ENCODE measurements at regions of chr2 and their contacts with region 1.

Region 1: DNA sequence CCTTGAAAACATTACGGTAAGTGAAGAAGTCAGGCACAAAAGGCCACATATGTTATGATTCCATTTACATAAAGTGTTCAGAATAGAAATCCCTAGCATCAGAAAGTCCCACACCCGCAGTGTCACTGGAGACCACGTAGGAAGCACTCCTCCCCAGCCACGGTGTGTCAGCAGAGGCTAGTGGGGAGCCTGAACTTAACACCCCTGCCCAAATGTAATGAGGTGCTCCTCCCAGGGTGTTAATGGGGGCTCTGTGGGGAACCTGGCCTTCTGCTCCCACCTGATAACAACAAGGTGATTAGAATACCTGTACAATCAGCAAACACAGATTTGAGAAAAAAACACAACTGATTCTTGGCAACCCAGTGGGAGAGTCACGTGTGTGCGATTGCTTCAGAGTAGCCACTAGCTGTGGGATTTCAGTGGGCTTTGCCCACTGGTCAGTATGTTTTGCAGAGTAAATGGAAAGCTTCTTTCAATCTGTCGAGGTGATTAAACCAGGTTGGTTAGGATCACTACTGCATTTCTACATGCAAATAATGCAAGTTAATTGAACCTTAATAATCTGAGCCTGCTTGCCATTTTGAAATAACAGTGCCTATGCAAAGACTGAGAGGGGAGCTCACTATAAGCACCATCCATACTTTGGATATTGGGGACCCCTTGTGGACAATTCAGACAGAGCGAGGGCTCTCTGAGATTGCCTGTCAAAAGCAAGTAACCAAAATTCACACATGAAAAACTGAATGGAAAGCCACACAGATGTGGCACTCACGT is 20.6 kb upstream of the ATRAID start:
- DNase-seq: peak; percentile 73
- H3K4me3 ChIP-seq: no peak overlapping the region
- H3K27ac ChIP-seq: no peak overlapping the region
- H3K4me1 ChIP-seq: no peaks in the 10 kb centered on the region
- H3K27me3 ChIP-seq: peaks cover 2 to 3% of the 10 kb centered on the region in 2 experiments
- CTCF ChIP-seq: peak; percentile 48 to 65
- POLR2A ChIP-seq: no peak

Region 2: DNA sequence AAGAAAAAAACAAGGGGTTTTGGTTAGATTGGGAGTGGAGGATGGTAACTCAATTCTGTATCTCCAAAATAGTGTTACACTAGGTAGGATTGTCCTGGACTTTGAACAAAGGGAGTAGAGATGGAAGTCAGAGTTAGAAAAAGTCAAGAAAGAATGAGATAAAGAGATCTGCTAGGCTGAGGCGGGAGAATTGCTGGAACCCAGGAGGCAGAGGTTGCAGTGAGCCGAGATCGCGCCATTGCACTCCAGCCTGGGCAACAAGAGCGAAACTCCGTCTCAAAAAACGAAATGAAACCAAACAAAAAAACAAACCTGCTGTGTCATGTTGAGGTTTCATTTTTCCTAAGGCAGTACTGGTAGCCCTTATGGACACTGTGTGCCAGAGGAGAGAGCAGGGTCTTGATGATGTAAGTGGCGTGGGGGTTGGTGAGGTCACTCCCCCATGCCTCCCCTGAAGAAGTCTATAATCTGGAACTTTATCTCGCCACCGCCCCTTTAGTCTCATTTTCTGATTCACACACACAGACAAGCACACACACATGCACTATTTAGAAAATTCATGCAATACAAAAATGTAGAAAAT is 779.1 kb before region 1 on chr2:
- CTCF ChIA-PET with region 1: no interaction called
- POLR2A ChIA-PET with region 1: no interaction called
- dilution Hi-C with region 1: no loop called
- intact Hi-C with region 1: no loop called
- DNase-seq: no peak
- H3K4me3 ChIP-seq: no peak overlapping the region
- H3K27ac ChIP-seq: no peak overlapping the region
- H3K4me1 ChIP-seq: no peaks in the 10 kb centered on the region
- H3K27me3 ChIP-seq: peaks cover 1 to 7% of the 10 kb centered on the region in 2 experiments
- CTCF ChIP-seq: no peak
- POLR2A ChIP-seq: no peak

Region 3: GRCh38 chr2:27145685-27146084 is 45.6 kb before region 1 on chr2:
- CTCF ChIA-PET with region 1: interaction called, 10 read pairs
- POLR2A ChIA-PET with region 1: no interaction called
- dilution Hi-C with region 1: no loop called
- intact Hi-C with region 1: no loop called
- DNase-seq: no peak
- H3K4me3 ChIP-seq: no peak overlapping the region
- H3K27ac ChIP-seq: no peak overlapping the region
- H3K4me1 ChIP-seq: no peaks in the 10 kb centered on the region
- H3K27me3 ChIP-seq: peaks cover 5 to 16% of the 10 kb centered on the region in 2 experiments
- CTCF ChIP-seq: no peak
- POLR2A ChIP-seq: no peak

Region 4: GRCh38 chr2:27162151-27163121 is 28.8 kb before region 1 on chr2:
- CTCF ChIA-PET with region 1: interaction called, 14 read pairs
- POLR2A ChIA-PET with region 1: no interaction called
- dilution Hi-C with region 1: no loop called
- intact Hi-C with region 1: no loop called
- DNase-seq: no peak
- H3K4me3 ChIP-seq: no peak overlapping the region
- H3K27ac ChIP-seq: no peak overlapping the region
- H3K4me1 ChIP-seq: no peaks in the 10 kb centered on the region
- H3K27me3 ChIP-seq: peaks cover 0 to 3% of the 10 kb centered on the region in 2 experiments
- CTCF ChIP-seq: no peak
- POLR2A ChIP-seq: no peak

Region 5: GRCh38 chr2:27174316-27175040 is 16.8 kb before region 1 on chr2:
- CTCF ChIA-PET with region 1: interaction called, 38 read pairs
- POLR2A ChIA-PET with region 1: no interaction called
- dilution Hi-C with region 1: no loop called
- intact Hi-C with region 1: no loop called
- DNase-seq: no peak
- H3K4me3 ChIP-seq: no peak overlapping the region
- H3K27ac ChIP-seq: no peak overlapping the region
- H3K4me1 ChIP-seq: no peaks in the 10 kb centered on the region
- H3K27me3 ChIP-seq: peaks cover 30 to 34% of the 10 kb centered on the region in 2 experiments
- CTCF ChIP-seq: no peak
- POLR2A ChIP-seq: no peak